ENCODE measurements at regions of chr9 and their contacts with region 1.

Region 1: DNA sequence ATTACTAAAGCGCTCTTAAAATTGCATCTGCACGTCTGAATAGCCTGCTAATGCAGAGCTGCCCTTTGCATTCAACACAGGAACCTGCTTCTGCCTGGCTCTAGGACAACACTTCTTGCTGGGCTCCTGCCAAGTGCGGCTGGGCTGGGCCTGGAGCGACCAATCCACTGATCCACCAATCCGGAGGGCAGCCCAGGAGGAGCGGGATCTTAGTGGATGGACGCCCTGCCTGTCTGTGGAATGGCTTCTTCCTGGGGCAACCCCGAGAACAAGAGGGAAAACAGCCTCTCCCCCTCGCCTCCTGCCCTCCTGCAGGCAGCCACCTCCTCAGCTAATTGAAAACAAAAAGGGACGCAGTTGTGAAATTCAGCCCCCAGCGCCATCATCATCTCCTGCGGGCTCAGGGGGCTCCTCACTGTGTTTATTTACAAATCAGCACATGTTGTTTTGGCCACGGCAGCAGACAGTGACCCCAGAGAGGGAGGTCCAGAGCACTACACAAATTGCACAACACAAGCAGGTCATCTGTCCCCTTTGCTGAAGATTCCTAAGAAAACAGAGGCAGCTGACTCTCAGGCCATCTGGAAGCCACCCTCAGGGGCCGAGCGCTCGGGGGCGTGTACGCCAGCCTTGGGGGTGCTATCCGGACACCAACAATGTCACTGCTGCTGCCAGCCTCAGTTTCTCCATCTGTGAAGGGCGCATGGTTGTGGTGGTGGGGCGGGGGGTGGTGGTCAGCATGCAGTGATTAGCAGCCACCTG is 57.3 kb downstream of the GADD45G start:
- H3K4me3 Mint-ChIP-seq: peak overlapping the region; percentile 60
- H3K27ac Mint-ChIP-seq: peak overlapping the region; percentile 94
- H3K4me1 Mint-ChIP-seq: peaks cover 74% of the 10 kb centered on the region
- H3K27me3 Mint-ChIP-seq: no peaks in the 10 kb centered on the region

Region 2: DNA sequence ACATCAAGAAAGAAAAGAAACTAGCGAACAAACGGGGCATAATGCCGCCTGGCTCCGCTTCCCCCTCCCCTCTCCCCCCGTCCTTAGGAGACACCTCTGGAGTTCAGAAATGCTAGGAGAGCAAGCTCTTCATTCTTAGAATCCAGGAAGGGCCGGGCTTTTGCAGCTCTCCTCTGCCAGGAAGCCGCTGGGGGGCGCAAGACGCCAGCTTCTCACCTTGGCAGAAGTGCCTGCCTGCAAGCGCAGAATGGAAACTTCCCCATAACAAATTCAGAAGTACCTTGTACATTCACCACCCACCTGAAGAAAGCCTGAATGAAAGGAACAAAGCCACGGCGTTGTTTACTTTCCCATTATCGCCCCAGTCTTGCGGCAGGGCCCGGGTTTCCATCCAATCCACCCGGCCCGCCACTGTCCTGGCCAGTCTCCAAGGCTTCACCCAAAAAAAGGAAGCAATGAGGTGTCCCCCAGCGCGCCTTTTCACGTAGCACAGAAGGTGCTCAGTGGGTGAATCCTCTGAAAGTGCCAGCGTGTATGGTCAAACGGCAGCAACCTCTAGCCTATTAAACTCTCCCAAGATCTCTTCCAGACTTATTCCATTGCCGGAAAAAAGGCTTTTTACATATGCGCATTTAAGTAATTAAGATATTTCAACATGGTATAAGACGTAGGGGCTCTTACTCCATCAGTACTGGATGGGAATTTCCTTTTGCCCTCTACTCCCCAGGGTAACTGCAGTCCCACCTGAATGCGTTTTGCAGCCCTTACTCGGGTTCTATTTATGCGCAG is 59.0 kb before region 1 on chr9:
- intact Hi-C with region 1: loop called (anchors 1 kb)
- H3K4me3 Mint-ChIP-seq: peak overlapping the region; percentile 73
- H3K27ac Mint-ChIP-seq: peak overlapping the region; percentile 34
- H3K4me1 Mint-ChIP-seq: peaks cover 28% of the 10 kb centered on the region
- H3K27me3 Mint-ChIP-seq: peaks cover 11% of the 10 kb centered on the region

Region 3: GRCh38 chr9:89613912-89614892 is 47.9 kb before region 1 on chr9:
- intact Hi-C with region 1: no loop called
- H3K4me3 Mint-ChIP-seq: no peak overlapping the region
- H3K27ac Mint-ChIP-seq: no peak overlapping the region
- H3K4me1 Mint-ChIP-seq: peaks cover 8% of the 10 kb centered on the region
- H3K27me3 Mint-ChIP-seq: peaks cover 36% of the 10 kb centered on the region

Region 4: GRCh38 chr9:89701221-89701798 is 39.2 kb after region 1 on chr9:
- intact Hi-C with region 1: loop called (anchors 5 kb)
- H3K4me3 Mint-ChIP-seq: peak overlapping the region; percentile 17
- H3K27ac Mint-ChIP-seq: peak overlapping the region; percentile 74
- H3K4me1 Mint-ChIP-seq: peaks cover 48% of the 10 kb centered on the region
- H3K27me3 Mint-ChIP-seq: peaks cover 16% of the 10 kb centered on the region

Region 5: DNA sequence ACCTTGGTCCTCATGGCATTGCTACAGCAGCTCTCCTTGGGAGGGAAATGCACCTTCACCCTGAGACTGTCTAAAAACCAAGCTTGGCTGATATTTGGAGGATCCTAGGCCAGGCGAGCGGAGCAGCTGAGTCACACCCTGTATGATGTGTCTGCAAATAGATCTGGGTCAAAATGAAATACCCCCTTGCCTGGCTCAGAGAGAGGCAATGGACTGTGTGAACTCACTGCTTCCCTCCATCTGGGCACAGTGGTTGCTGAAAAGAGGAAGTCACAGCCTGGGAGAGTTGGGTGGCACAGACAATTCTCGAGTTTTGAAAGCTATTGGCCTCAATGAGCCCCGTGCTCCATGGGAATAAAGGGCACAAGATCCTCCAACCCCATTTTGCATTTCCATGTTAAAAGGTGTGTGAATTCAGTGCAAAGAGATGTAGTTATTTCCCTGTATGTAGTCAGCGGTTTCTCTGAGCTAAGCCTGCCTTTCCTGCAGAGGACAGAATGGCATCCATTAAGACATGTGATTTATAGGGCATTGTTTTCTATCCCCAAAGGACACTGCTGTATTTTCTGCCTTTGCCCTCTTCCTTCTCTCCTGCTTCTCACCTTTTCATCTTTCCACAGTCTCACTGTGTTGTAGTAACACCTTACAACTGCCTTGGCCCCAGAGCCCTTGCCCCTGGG is 119.8 kb after region 1 on chr9:
- intact Hi-C with region 1: loop called (anchors 2 kb)
- H3K4me3 Mint-ChIP-seq: no peak overlapping the region
- H3K27ac Mint-ChIP-seq: peak overlapping the region; percentile 22
- H3K4me1 Mint-ChIP-seq: peaks cover 35% of the 10 kb centered on the region
- H3K27me3 Mint-ChIP-seq: peaks cover 36% of the 10 kb centered on the region

Region 6: DNA sequence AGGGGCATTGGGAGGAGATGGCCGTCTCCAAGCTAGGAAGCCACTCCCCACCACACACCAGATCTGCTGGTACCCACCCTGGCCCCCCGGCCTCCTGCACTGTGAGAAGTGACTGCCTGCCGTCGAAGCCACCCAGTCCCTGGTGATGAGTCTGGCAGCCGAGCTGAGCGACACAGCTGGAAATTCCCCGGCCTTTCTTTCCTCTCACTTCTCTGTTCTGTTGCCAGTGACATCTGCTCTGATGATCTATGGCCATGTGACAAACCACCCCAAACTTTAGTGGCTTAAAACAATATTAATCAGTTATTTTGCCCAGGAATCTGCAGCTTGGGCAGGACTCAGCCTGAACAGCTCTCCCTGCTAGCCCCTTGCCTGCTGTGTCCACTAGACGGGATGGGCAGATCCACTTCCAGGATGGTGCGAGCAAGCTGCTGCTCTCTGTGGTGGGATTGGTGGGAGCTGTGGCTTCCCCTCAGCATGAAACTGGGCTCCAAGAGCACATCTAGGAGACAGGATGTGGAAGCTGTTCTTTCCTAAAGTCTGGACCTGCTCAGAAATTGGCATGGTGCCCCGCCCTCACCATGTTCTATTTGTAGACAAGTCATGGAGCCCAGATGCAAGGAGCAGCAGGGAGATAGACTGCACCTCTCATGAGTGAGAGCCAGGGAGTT is 153.9 kb after region 1 on chr9:
- intact Hi-C with region 1: loop called (anchors 10 kb)
- H3K4me3 Mint-ChIP-seq: peak overlapping the region; percentile 28
- H3K27ac Mint-ChIP-seq: peak overlapping the region; percentile 86
- H3K4me1 Mint-ChIP-seq: peaks cover 55% of the 10 kb centered on the region
- H3K27me3 Mint-ChIP-seq: peaks cover 48% of the 10 kb centered on the region

Measured in dendritic cell treated with granulocyte-macrophage colony-stimulating factor and Interleukin-4, amounts not matched to agents 40 ng/mL and 50 ng/mL, for 4 days (primary cell).